Heart left ventricle (tissue), 16 donors: ENCODE measurements at regions of chr7 and their contacts with region 1.

Region 1: DNA sequence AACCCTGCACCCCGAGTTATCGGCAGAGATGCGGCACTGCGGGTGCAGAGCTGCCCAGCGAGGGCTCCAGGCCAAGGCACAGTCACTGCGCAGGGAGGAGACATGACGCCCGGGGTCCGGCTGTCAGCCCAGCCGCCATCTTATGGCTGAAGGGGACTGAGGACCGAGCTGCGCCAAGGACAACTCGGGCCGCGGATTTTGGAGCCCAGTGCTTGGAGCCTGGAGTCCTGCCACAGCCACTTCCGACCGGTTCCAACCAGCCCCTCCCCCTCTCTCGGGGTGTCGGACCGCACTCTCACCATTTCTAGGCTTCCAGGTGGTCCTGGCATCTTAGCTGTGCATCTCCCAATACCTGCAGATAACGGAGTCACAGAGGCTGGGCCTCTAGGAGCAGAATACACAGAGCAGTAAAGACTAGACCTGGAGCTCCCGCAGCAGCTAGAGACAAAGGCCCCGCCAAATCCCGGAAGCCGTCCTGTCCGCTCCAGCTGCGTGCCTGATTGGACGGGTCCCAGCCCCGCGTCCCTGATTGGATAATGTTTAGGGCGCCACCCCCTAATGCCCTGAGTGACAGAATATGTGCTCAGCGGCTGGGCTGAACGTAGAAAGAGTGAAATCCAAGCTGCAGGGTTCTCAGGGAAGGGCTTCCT is at the start of gene ZNF680:
- DNase-seq: peak; percentile 96 to 98 (median 97)
- ATAC-seq: peak; percentile 97 to 98 (median 98)
- H3K4me3 ChIP-seq: peak within 1 kb of the TSS; percentile 47 to 93 (median 84)
- H3K27ac ChIP-seq: peak within 1 kb of the TSS; percentile 76 to 94 (median 88)
- H3K4me1 ChIP-seq: peaks cover 0 to 51% (median 35%) of the 10 kb centered on the region in 12 donors
- H3K27me3 ChIP-seq: no peaks in the 10 kb centered on the region
- CTCF ChIP-seq: no peak
- POLR2A ChIP-seq: peak; percentile 29 to 91
- total RNA-seq, gene ZNF680: 10.9 to 25.9 (median 17.5) TPM

Region 2: GRCh38 chr7:64313740-64314491 is 248.8 kb before region 1 on chr7 and contains the start of gene ZNF736:
- intact Hi-C with region 1: loop called in 6 of 10 experiments (anchors 5 to 10 kb)
- DNase-seq: peak; percentile 89 to 93 (median 92)
- ATAC-seq: peak; percentile 99 to 100 (median 100)
- H3K4me3 ChIP-seq: peak within 1 kb of the TSS; percentile 51 to 89 (median 73)
- H3K27ac ChIP-seq: peak within 1 kb of the TSS in 11 of 12 donors; percentile 24 to 79 (median 58)
- H3K4me1 ChIP-seq: peaks cover 0 to 25% (median 16%) of the 10 kb centered on the region in 12 donors
- H3K27me3 ChIP-seq: no peaks in the 10 kb centered on the region
- CTCF ChIP-seq: no peak
- POLR2A ChIP-seq: peak in 1 of 2 donors; percentile 61
- total RNA-seq, gene ZNF736: 2.5 to 9.0 (median 3.9) TPM

Region 3: GRCh38 chr7:64504581-64505120 is 58.1 kb before region 1 on chr7:
- intact Hi-C with region 1: loop called in 2 of 10 experiments (anchors 10 kb)
- DNase-seq: no peak
- ATAC-seq: no peak
- H3K4me3 ChIP-seq: no peak overlapping the region
- H3K27ac ChIP-seq: no peak overlapping the region
- H3K4me1 ChIP-seq: no peaks in the 10 kb centered on the region
- H3K27me3 ChIP-seq: no peaks in the 10 kb centered on the region
- CTCF ChIP-seq: no peak
- POLR2A ChIP-seq: no peak

Region 4: DNA sequence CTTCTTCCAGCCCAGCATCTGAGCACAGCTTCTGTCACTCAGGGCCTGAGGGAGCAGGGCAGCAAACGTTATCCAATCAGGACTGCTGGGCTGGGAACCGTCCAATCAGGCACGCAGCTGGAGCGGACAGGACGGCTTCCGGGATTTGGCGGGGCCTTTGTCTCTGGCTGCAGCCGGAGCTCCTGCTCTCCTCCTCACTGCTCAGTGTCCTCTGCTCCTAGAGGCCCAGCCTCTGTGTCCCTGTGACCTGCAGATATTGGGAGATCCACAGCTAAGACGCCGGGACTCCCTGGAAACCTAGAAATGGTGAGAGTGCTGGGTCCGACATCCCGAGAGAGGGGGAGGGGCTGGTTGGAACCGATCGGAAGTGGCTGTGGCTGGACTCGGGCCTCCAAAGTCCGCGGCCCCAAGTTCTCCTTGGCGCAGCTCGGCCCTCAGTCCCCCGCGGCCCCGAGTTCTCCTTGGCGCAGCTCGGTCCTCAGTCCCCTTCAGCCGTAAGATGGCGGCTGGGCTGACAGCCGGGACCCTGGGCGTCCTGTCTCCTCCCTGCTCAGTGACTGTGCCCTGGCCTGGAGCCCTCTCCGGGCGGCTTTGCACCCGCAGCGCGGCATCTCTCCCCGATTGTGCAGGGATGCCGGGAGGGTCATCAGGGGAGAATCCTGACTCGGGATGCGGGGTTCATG is 103.4 kb after region 1 on chr7 and contains the start of gene ZNF107:
- intact Hi-C with region 1: loop called in 2 of 10 experiments (anchors 10 kb)
- DNase-seq: peak; percentile 93 to 96 (median 94)
- ATAC-seq: peak; percentile 100
- H3K4me3 ChIP-seq: peak within 1 kb of the TSS; percentile 53 to 93 (median 74)
- H3K27ac ChIP-seq: peak within 1 kb of the TSS in 10 of 12 donors; percentile 62 to 78 (median 68)
- H3K4me1 ChIP-seq: peaks cover 0 to 16% (median 9%) of the 10 kb centered on the region in 12 donors
- H3K27me3 ChIP-seq: no peaks in the 10 kb centered on the region
- CTCF ChIP-seq: no peak
- POLR2A ChIP-seq: peak in 1 of 2 donors; percentile 52
- total RNA-seq, gene ZNF107: 1.2 to 4.0 (median 1.8) TPM